ENCODE measurements at regions of chr11 and their contacts with region 1.

Region 1: GRCh38 chr11:109697140-109697843 is 275.3 kb downstream of the C11orf87 start:
- DNase-seq: no peak
- ATAC-seq: no peak

Region 2: GRCh38 chr11:108703916-108704315 is 993.4 kb before region 1 on chr11:
- intact Hi-C with region 1: loop called (anchors 10 kb)
- DNase-seq: no peak
- ATAC-seq: no peak

Region 3: GRCh38 chr11:109641549-109641948 is 55.7 kb before region 1 on chr11:
- intact Hi-C with region 1: no loop called
- DNase-seq: no peak
- ATAC-seq: no peak

Region 4: GRCh38 chr11:109818290-109818689 is 121.0 kb after region 1 on chr11:
- intact Hi-C with region 1: no loop called
- DNase-seq: no peak
- ATAC-seq: no peak